Activated naive CD4-positive, alpha-beta T cell treated with anti-CD3 and anti-CD28 coated beads for 36 hours (primary cell): ENCODE measurements at regions of chr19 and their contacts with region 1.

Region 1: GRCh38 chr19:11738746-11739620 is at the start of gene ZNF823:
- DNase-seq: peak; percentile 100
- H3K4me3 Mint-ChIP-seq: peak within 1 kb of the TSS; percentile 99
- H3K27ac Mint-ChIP-seq: peak within 1 kb of the TSS; percentile 82
- H3K4me1 Mint-ChIP-seq: peaks cover 18% of the 10 kb centered on the region
- H3K27me3 Mint-ChIP-seq: no peaks in the 10 kb centered on the region
- total RNA-seq, gene ZNF823: 4.1 to 4.2 TPM

Region 2: DNA sequence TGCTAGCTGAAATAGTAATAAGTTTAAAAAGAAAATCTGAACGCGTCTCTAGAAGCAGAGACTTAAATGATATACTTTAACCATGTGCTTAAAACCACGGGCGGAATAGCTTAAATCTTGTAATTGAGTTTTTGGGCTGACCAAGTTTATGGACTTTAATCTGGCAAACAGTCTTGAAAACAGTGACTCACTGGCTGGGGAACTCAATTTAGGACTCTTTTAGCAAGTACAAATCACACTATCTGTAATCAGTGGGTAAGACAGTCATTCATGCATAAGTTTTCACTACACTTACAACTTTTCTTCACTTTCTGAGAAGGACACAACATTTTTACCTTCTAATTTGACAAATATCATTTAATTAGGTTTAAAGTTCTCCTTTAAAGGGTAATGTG is 114.9 kb before region 1 on chr19:
- CTCF ChIA-PET with region 1: no interaction called
- intact Hi-C with region 1: no loop called
- DNase-seq: no peak
- H3K4me3 Mint-ChIP-seq: no peak overlapping the region
- H3K27ac Mint-ChIP-seq: no peak overlapping the region
- H3K4me1 Mint-ChIP-seq: peaks cover 8% of the 10 kb centered on the region
- H3K27me3 Mint-ChIP-seq: peaks cover 9% of the 10 kb centered on the region

Region 3: DNA sequence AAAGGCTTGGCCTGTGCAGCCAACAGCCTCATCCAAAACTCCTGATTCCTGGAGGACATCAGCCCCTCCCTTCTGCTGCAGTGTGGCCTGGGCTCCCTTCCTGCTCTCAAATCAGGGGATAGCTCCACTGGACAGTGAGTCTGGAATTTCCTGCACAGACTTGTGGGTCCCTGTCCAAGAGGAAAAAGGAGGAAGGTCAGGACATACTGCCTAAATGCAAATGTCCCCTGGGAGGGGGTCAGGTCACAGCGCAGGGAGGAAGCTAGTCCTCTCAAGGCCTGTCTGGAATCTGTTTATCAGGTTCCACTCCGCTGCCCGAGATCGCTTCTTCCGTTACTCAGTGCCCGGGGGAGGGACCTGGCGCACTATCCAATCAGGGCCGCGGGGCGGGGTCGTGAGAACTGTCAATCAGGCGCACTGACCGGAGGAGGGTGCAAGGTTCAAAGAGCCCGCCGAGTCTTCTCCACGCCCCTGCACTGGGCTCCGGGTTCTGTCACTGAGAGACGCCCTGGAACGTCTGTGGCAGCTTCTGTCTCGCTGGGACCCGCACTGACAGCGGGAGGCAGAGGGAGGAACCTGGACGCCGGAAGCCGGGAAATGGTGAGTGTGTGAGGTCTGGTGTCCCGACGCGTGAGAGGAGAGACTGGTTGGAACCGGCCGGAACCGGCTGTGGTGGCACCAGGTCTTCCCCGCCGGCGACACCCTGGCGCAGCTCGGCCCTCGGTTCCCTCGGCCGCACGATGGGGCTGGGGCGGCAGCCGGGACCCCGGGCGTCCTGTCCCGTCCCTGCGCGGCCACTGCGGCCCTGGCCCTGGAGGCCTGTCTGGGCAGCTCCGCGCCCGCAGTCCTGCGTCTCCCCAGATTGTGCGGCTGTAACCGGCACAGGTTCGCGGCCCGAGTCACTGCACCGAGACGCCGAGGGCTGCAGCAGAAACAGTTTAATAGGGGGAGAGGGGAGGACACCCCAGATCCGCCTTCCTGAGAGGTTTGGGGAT is 27.9 kb after region 1 on chr19 and contains the start of gene ZNF441:
- CTCF ChIA-PET with region 1: no interaction called
- intact Hi-C with region 1: loop called (anchors 1 kb)
- DNase-seq: peak; percentile 98
- H3K4me3 Mint-ChIP-seq: peak within 1 kb of the TSS; percentile 96
- H3K27ac Mint-ChIP-seq: peak within 1 kb of the TSS; percentile 93
- H3K4me1 Mint-ChIP-seq: peaks cover 16% of the 10 kb centered on the region
- H3K27me3 Mint-ChIP-seq: peaks cover 2% of the 10 kb centered on the region
- total RNA-seq, gene ZNF441: 4.0 TPM